Transverse colon (tissue), 4 donors: ENCODE measurements at regions of chr1 and their contacts with region 1.

Region 1: DNA sequence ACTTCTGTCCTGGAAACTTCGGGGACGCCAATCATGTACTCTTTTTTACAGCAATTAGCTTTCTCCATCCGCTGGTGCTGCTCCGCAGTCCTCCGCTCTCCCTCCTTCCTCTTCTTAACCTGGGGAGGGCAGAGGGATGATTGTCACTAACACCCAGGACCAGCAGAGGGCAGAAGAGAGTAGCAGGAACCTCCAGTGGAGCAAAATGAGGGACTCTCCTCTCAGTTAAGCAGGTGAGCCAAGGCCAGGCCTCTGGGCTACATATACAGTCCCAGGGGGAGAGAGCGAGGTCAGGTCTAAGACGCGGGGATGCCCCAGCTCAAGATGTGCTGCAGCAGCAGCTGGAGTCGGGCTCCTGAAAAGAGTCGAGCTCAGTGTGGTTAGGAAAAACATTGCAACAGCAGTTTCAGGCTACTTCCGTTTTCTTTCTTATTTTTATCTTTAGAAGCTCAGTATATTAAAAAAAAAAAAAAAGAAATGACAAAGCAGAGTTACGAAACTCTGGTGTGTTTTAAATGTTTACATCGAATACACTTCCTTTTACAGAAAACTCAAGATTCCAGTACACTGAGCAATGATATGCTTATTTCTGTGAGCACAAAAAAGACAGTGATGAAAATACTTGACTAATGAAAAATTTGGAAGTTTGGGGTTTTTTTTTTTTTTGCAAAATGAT is 25.7 kb upstream of the NLRP3 start:
- DNase-seq: peak; percentile 87
- H3K4me3 ChIP-seq: peak overlapping the region in 1 of 4 donors; percentile 29
- H3K27ac ChIP-seq: peak overlapping the region in 3 of 4 donors; percentile 44 to 59 (median 55)
- H3K4me1 ChIP-seq: peaks cover 0 to 8% (median 2%) of the 10 kb centered on the region in 4 donors
- H3K27me3 ChIP-seq: no peaks in the 10 kb centered on the region
- CTCF ChIP-seq: peak; percentile 86 to 89 (median 88)
- EP300 ChIP-seq: no peak
- POLR2A ChIP-seq: no peak

Region 2: DNA sequence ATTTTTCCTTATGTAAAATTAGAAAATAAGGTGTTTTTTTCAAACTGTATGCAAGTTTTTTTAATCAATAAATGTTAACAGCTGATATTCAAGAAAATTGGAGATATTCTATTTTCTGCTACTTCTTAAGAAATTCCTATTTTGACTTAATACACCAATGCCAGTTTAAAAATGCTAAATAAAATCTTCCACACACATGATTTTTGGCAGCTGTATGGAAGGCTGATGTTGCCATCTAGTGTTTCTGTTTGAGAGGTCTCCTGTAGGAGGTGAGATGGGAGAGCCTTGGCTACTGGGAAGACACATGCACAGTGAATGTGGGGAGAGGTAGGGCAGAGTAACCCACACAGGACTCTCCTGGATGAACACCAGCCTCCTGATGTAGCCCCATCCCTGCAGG is 96.8 kb after region 1 on chr1:
- in situ Hi-C with region 1: loop called in 3 of 4 experiments (anchors 5 to 25 kb)
- intact Hi-C with region 1: loop called (anchors 5 kb)
- DNase-seq: peak; percentile 14
- H3K4me3 ChIP-seq: no peak overlapping the region
- H3K27ac ChIP-seq: no peak overlapping the region
- H3K4me1 ChIP-seq: no peaks in the 10 kb centered on the region
- H3K27me3 ChIP-seq: no peaks in the 10 kb centered on the region
- CTCF ChIP-seq: peak; percentile 37 to 64 (median 51)
- EP300 ChIP-seq: no peak
- POLR2A ChIP-seq: no peak

Region 3: GRCh38 chr1:247576495-247576894 is 186.2 kb after region 1 on chr1:
- in situ Hi-C with region 1: loop called in 1 of 4 experiments (anchors 10 kb)
- intact Hi-C with region 1: no loop called
- DNase-seq: no peak
- H3K4me3 ChIP-seq: no peak overlapping the region
- H3K27ac ChIP-seq: no peak overlapping the region
- H3K4me1 ChIP-seq: no peaks in the 10 kb centered on the region
- H3K27me3 ChIP-seq: no peaks in the 10 kb centered on the region
- CTCF ChIP-seq: peak in 4 of 5 experiments; percentile 19 to 32 (median 25)
- EP300 ChIP-seq: no peak
- POLR2A ChIP-seq: no peak